Naive thymus-derived CD4-positive, alpha-beta T cell (primary cell): ENCODE measurements at regions of chr9 and their contacts with region 1.

Region 1: DNA sequence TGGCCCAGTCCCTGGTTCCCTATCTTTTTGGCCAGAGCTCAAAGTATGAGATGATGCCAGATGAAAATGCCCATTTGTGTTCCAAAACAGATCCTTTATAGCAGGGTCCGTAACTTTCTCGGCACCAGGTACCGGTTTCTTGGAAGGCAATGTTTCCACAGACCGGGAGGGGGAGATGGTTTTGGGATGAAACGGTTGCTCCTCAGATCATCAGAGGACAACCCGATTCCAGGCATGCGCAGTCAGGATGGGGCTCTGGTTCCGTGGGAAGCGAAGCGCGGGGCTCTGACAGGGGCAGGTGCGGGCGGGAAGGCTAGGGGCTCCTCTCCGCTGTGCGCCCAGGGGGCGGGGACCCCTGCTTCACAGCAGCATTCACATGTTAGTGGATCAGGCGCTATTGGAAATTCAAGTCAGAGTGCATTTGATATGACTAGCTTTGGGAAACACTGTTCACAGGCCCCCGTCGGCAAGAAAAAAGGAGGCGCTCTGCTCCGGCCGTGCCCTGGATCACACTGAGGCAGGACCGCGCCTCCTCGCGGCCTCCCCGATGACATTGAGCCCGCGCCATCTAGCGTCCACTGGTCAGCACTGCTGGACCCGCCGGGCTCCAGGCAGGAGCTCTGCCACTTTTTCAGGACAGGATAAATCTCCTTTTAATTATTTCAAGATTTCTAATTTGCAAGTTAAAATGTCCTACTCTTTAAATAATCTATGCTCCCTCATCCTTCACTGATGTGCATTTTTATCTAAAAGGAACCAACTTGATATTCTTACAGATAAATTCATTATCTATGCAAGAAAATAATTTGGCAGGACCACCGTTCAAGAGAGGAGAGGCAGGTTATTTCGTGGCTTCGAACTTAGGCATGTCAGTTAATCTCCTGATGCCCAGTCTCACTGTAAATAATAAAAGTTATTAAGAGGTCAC is 190.0 kb downstream of the FANCC start:
- DNase-seq: peak; percentile 23 to 75 (median 56)
- ATAC-seq: peak; percentile 94
- H3K4me3 ChIP-seq: no peak overlapping the region
- H3K4me3 Mint-ChIP-seq: peak overlapping the region in 1 of 10 donors; percentile 46
- H3K27ac ChIP-seq: no peak overlapping the region
- H3K27ac Mint-ChIP-seq: no peak overlapping the region
- H3K4me1 ChIP-seq: no peaks in the 10 kb centered on the region
- H3K4me1 Mint-ChIP-seq: peaks cover 0 to 8% (median 4%) of the 10 kb centered on the region in 7 donors
- H3K27me3 ChIP-seq: no peaks in the 10 kb centered on the region
- H3K27me3 Mint-ChIP-seq: no peaks in the 10 kb centered on the region

Region 2: GRCh38 chr9:94672811-94673487 is 454.6 kb before region 1 on chr9:
- CTCF ChIA-PET with region 1: interaction called, 11 read pairs
- POLR2A ChIA-PET with region 1: no interaction called
- intact Hi-C with region 1: loop called (anchors 1 to 5 kb)
- DNase-seq: no peak
- ATAC-seq: no peak
- H3K4me3 ChIP-seq: no peak overlapping the region
- H3K4me3 Mint-ChIP-seq: no peak overlapping the region
- H3K27ac ChIP-seq: no peak overlapping the region
- H3K27ac Mint-ChIP-seq: no peak overlapping the region
- H3K4me1 ChIP-seq: no peaks in the 10 kb centered on the region
- H3K4me1 Mint-ChIP-seq: peaks cover 0 to 14% (median 3%) of the 10 kb centered on the region in 7 donors
- H3K27me3 ChIP-seq: no peaks in the 10 kb centered on the region
- H3K27me3 Mint-ChIP-seq: peaks cover 0 to 26% (median 4%) of the 10 kb centered on the region in 5 donors

Region 3: GRCh38 chr9:94681508-94681907 is 446.0 kb before region 1 on chr9:
- CTCF ChIA-PET with region 1: interaction called, 123 read pairs
- POLR2A ChIA-PET with region 1: interaction called, 3 read pairs
- intact Hi-C with region 1: loop called (anchors 1 kb)
- DNase-seq: peak; percentile 20 to 63 (median 52)
- ATAC-seq: peak; percentile 94
- H3K4me3 ChIP-seq: no peak overlapping the region
- H3K4me3 Mint-ChIP-seq: no peak overlapping the region
- H3K27ac ChIP-seq: no peak overlapping the region
- H3K27ac Mint-ChIP-seq: no peak overlapping the region
- H3K4me1 ChIP-seq: no peaks in the 10 kb centered on the region
- H3K4me1 Mint-ChIP-seq: no peaks in the 10 kb centered on the region
- H3K27me3 ChIP-seq: no peaks in the 10 kb centered on the region
- H3K27me3 Mint-ChIP-seq: peaks cover 0 to 47% (median 16%) of the 10 kb centered on the region in 5 donors

Region 4: GRCh38 chr9:94783102-94783664 is 344.3 kb before region 1 on chr9:
- CTCF ChIA-PET with region 1: interaction called, 23 read pairs
- POLR2A ChIA-PET with region 1: interaction called, 3 read pairs
- intact Hi-C with region 1: loop called (anchors 1 kb)
- DNase-seq: peak in 6 of 9 donors; percentile 10 to 31 (median 20)
- ATAC-seq: peak; percentile 61
- H3K4me3 ChIP-seq: no peak overlapping the region
- H3K4me3 Mint-ChIP-seq: no peak overlapping the region
- H3K27ac ChIP-seq: no peak overlapping the region
- H3K27ac Mint-ChIP-seq: no peak overlapping the region
- H3K4me1 ChIP-seq: no peaks in the 10 kb centered on the region
- H3K4me1 Mint-ChIP-seq: peaks cover 0 to 14% (median 6%) of the 10 kb centered on the region in 7 donors
- H3K27me3 ChIP-seq: no peaks in the 10 kb centered on the region
- H3K27me3 Mint-ChIP-seq: no peaks in the 10 kb centered on the region

Region 5: GRCh38 chr9:95268681-95269080 is 141.2 kb after region 1 on chr9:
- CTCF ChIA-PET with region 1: no interaction called
- POLR2A ChIA-PET with region 1: no interaction called
- intact Hi-C with region 1: loop called in 1 of 2 experiments (anchors 2 kb)
- DNase-seq: no peak
- ATAC-seq: no peak
- H3K4me3 ChIP-seq: no peak overlapping the region
- H3K4me3 Mint-ChIP-seq: no peak overlapping the region
- H3K27ac ChIP-seq: no peak overlapping the region
- H3K27ac Mint-ChIP-seq: peak overlapping the region in 2 of 9 donors; percentile 12 to 32
- H3K4me1 ChIP-seq: peaks cover 0 to 4% of the 10 kb centered on the region in 2 donors
- H3K4me1 Mint-ChIP-seq: peaks cover 9 to 49% (median 27%) of the 10 kb centered on the region in 7 donors
- H3K27me3 ChIP-seq: no peaks in the 10 kb centered on the region
- H3K27me3 Mint-ChIP-seq: no peaks in the 10 kb centered on the region

Region 6: GRCh38 chr9:95336281-95336680 is 208.8 kb after region 1 on chr9:
- CTCF ChIA-PET with region 1: no interaction called
- POLR2A ChIA-PET with region 1: no interaction called
- intact Hi-C with region 1: no loop called
- DNase-seq: peak in 3 of 9 donors; percentile 18 to 29 (median 26)
- ATAC-seq: peak; percentile 78
- H3K4me3 ChIP-seq: no peak overlapping the region
- H3K4me3 Mint-ChIP-seq: no peak overlapping the region
- H3K27ac ChIP-seq: no peak overlapping the region
- H3K27ac Mint-ChIP-seq: no peak overlapping the region
- H3K4me1 ChIP-seq: no peaks in the 10 kb centered on the region
- H3K4me1 Mint-ChIP-seq: no peaks in the 10 kb centered on the region
- H3K27me3 ChIP-seq: no peaks in the 10 kb centered on the region
- H3K27me3 Mint-ChIP-seq: peaks cover 6 to 13% (median 8%) of the 10 kb centered on the region in 5 donors